ENCODE measurements at regions of chr4 and their contacts with region 1.

Region 1: GRCh38 chr4:110516106-110516922 is 40.4 kb downstream of the ENPEP start:
- DNase-seq: peak; percentile 50 to 71
- ATAC-seq: peak; percentile 71 to 93 (median 82)
- H3K4me3 ChIP-seq: peak overlapping the region in 9 of 10 donors; percentile 12 to 59 (median 48)
- H3K27ac ChIP-seq: peak overlapping the region in 4 of 10 donors; percentile 20 to 41 (median 24)
- H3K4me1 ChIP-seq: peaks cover 0 to 14% (median 0%) of the 10 kb centered on the region in 9 donors
- H3K27me3 ChIP-seq: peaks cover 0 to 4% (median 0%) of the 10 kb centered on the region in 7 donors
- CTCF ChIP-seq: peak; percentile 56 to 82 (median 79)

Region 2: DNA sequence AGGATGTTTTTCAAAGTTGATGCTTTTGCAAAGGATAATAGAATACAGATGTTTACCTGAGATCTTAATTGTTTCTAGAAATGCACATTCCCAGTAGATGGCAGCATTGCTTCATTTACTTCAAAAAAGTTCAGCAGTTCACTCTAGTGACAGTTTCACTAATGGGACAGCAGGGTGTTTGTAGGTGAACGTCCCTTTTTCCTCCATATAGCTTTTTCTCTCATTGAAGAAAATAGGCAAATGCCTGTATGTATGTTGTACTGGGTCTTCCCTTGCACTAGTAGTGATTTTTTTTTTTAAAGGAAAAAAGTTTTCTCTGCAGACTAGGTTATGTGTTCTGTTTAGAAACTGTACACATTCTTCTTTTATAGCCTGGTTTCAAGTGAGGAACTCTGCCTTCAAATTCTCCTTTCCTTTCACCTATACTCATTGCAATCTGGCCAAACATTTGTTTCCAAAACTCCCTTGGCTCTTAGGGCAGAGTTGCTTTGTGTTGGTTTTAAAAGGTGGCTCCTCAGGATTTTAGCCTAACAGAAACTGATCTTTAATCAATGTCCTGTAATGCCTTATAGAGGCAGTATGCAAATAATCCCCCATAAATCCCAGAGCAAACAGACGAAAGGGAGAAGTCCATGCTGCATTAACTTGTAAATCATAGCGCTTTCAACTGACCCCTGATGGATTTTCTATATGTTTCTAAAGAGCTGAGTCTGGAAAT is 517.3 kb before region 1 on chr4:
- intact Hi-C with region 1: loop called in 9 of 10 experiments (anchors 2 to 5 kb)
- DNase-seq: peak in 1 of 2 donors; percentile 20
- ATAC-seq: peak in 6 of 8 donors; percentile 45 to 70 (median 56)
- H3K4me3 ChIP-seq: no peak overlapping the region
- H3K27ac ChIP-seq: no peak overlapping the region
- H3K4me1 ChIP-seq: peaks cover 0 to 8% (median 0%) of the 10 kb centered on the region in 9 donors
- H3K27me3 ChIP-seq: peaks cover 0 to 11% (median 0%) of the 10 kb centered on the region in 7 donors
- CTCF ChIP-seq: peak; percentile 35 to 76 (median 64)

Region 3: GRCh38 chr4:110005461-110006056 is 510.8 kb before region 1 on chr4:
- intact Hi-C with region 1: loop called in 8 of 10 experiments (anchors 2 to 5 kb)
- DNase-seq: no peak
- ATAC-seq: peak in 1 of 8 donors; percentile 29
- H3K4me3 ChIP-seq: no peak overlapping the region
- H3K27ac ChIP-seq: no peak overlapping the region
- H3K4me1 ChIP-seq: no peaks in the 10 kb centered on the region
- H3K27me3 ChIP-seq: no peaks in the 10 kb centered on the region
- CTCF ChIP-seq: peak; percentile 26 to 79 (median 73)

Region 4: GRCh38 chr4:110211007-110211769 is 305.1 kb before region 1 on chr4:
- intact Hi-C with region 1: loop called in 1 of 10 experiments (anchors 10 kb)
- DNase-seq: no peak
- ATAC-seq: peak in 4 of 8 donors; percentile 46 to 60 (median 56)
- H3K4me3 ChIP-seq: peak overlapping the region in 1 of 10 donors; percentile 22
- H3K27ac ChIP-seq: no peak overlapping the region
- H3K4me1 ChIP-seq: peaks cover 0 to 4% (median 0%) of the 10 kb centered on the region in 9 donors
- H3K27me3 ChIP-seq: peaks cover 0 to 5% (median 0%) of the 10 kb centered on the region in 7 donors
- CTCF ChIP-seq: peak; percentile 49 to 87 (median 77)

Region 5: GRCh38 chr4:110310795-110311194 is 205.5 kb before region 1 on chr4:
- intact Hi-C with region 1: loop called in 7 of 10 experiments (anchors 2 to 10 kb)
- DNase-seq: no peak
- ATAC-seq: no peak
- H3K4me3 ChIP-seq: no peak overlapping the region
- H3K27ac ChIP-seq: no peak overlapping the region
- H3K4me1 ChIP-seq: peaks cover 0 to 7% (median 0%) of the 10 kb centered on the region in 9 donors
- H3K27me3 ChIP-seq: no peaks in the 10 kb centered on the region
- CTCF ChIP-seq: no peak

Region 6: GRCh38 chr4:110344162-110344561 is 172.2 kb before region 1 on chr4:
- intact Hi-C with region 1: loop called in 5 of 10 experiments (anchors 2 to 10 kb)
- DNase-seq: no peak
- ATAC-seq: peak in 1 of 8 donors; percentile 61
- H3K4me3 ChIP-seq: no peak overlapping the region
- H3K27ac ChIP-seq: no peak overlapping the region
- H3K4me1 ChIP-seq: no peaks in the 10 kb centered on the region
- H3K27me3 ChIP-seq: no peaks in the 10 kb centered on the region
- CTCF ChIP-seq: peak in 6 of 9 donors; percentile 24 to 50 (median 38)